ENCODE measurements at regions of chr15 and their contacts with region 1.

Region 1: DNA sequence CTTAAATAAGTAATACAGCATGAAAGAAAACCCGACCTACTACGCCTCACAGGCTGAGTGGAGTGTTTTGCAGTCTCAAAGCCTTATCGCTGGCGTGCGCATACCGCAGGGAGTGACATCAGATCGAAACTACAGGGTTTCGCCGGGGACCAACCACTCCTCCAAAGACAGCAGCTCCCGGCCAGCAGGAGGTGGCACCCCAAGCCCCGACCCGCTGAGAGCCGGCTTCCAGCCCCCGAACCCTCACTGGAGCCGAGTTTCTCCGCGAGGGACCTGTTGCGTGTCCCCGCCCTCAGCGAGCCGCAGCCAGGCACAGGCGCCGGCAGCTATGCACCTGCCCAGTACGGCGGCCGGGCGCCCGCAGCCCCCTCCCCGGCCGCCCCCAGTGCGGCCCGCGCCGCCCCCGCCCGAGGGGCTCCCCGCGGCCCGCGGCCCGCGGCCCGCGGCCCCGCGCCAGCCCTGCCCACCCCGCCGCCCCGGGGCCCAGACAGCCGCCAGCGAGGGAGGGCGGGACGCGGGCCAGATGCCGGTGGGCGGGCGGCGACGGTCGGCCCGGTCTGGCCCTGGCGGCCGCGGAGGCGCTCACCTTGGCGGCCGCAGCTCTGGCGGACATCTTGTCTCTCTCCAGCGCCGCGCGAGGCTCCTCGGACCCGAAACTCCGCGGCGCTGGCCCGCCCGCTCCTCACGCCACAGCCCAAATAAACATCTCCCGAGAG is 694 bp downstream of the TJP1 start:
- DNase-seq: peak; percentile 88
- H3K4me3 ChIP-seq: peak overlapping the region; percentile 77 to 93 (median 86)
- H3K27ac ChIP-seq: peak overlapping the region; percentile 97 to 99 (median 98)
- H3K4me1 ChIP-seq: peaks cover 0 to 26% (median 25%) of the 10 kb centered on the region in 4 donors
- H3K27me3 ChIP-seq: no peaks in the 10 kb centered on the region
- CTCF ChIP-seq: peak in 1 of 4 experiments; percentile 12
- EP300 ChIP-seq: no peak
- POLR2A ChIP-seq: peak; percentile 36 to 40

Region 2: GRCh38 chr15:29225534-29226234 is 595.9 kb before region 1 on chr15:
- intact Hi-C with region 1: no loop called
- DNase-seq: no peak
- H3K4me3 ChIP-seq: no peak overlapping the region
- H3K27ac ChIP-seq: no peak overlapping the region
- H3K4me1 ChIP-seq: no peaks in the 10 kb centered on the region
- H3K27me3 ChIP-seq: peaks cover 0 to 4% (median 0%) of the 10 kb centered on the region in 3 donors
- CTCF ChIP-seq: no peak
- EP300 ChIP-seq: no peak
- POLR2A ChIP-seq: no peak

Region 3: DNA sequence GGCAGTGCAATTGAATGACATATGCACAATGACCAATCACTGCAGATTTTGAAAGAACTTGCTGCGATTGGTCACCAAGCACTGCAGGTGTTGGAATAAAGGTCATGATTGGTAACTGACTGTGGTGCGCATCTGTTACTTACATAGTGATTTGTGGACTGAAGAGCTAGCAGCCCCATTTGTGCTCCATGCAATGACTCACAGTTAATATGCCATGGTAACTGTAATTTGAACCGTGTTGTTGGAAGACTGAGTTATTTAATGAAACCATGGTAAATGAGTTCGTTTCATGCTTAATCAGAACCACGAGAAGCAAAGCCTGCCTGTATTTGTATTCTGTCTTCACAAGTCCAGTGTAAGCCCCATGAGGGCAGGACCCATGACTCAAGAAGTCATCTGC is 219.8 kb before region 1 on chr15:
- intact Hi-C with region 1: no loop called
- DNase-seq: no peak
- H3K4me3 ChIP-seq: no peak overlapping the region
- H3K27ac ChIP-seq: no peak overlapping the region
- H3K4me1 ChIP-seq: no peaks in the 10 kb centered on the region
- H3K27me3 ChIP-seq: no peaks in the 10 kb centered on the region
- CTCF ChIP-seq: no peak
- EP300 ChIP-seq: no peak
- POLR2A ChIP-seq: no peak

Region 4: GRCh38 chr15:29736744-29737020 is 84.9 kb before region 1 on chr15:
- intact Hi-C with region 1: loop called (anchors 5 kb)
- DNase-seq: no peak
- H3K4me3 ChIP-seq: no peak overlapping the region
- H3K27ac ChIP-seq: no peak overlapping the region
- H3K4me1 ChIP-seq: peaks cover 0 to 34% (median 18%) of the 10 kb centered on the region in 4 donors
- H3K27me3 ChIP-seq: no peaks in the 10 kb centered on the region
- CTCF ChIP-seq: no peak
- EP300 ChIP-seq: no peak
- POLR2A ChIP-seq: no peak

Measured in sigmoid colon (tissue), 7 donors.